Calu3 (cell line): ENCODE measurements at regions of chrX and their contacts with region 1.

Region 1: GRCh38 chrX:45769761-45770582 is 569.3 kb upstream of the DIPK2B start:
- DNase-seq: peak; percentile 84
- H3K4me3 Mint-ChIP-seq: peak overlapping the region; percentile 89
- H3K27ac Mint-ChIP-seq: peak overlapping the region; percentile 97
- H3K4me1 Mint-ChIP-seq: peaks cover 30% of the 10 kb centered on the region
- H3K27me3 Mint-ChIP-seq: no peaks in the 10 kb centered on the region
- CTCF ChIP-seq: no peak

Region 2: DNA sequence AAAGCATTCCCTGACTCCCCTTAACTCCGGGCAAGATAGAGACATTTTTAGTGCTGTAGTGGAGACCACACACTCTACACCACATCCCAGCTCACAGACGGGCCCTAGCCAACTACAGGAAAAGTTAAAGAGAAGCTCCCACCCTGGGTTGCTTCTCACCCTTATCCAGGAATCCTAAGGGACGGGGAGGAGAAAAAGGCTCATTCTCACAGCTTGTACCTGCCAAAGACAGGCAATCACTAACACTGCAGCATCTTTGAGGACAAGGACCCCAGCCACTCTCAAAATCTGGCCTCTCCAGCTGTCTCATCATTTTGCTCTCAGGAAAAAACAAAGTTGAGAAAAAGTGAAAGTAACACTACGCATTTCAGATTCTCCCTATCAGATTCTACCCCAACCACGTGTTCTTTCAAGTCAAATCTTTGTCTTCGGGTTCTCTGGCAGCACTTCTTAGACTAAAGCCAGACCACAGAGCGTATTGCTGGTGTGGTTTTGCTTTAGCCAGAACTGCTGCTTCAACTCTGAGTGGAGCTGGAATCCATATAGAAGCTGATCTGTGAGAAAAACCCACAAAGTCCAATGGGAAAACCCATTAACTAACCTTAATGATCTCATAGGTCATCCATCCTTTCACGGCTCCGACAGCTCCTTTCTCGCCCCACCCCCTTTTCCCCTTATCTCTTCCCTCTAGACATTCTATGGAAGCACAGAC is 36.6 kb after region 1 on chrX:
- CTCF ChIA-PET with region 1: interaction called, 3 read pairs
- intact Hi-C with region 1: loop called (anchors 5 kb)
- DNase-seq: no peak
- H3K4me3 Mint-ChIP-seq: peak overlapping the region; percentile 67
- H3K27ac Mint-ChIP-seq: peak overlapping the region; percentile 86
- H3K4me1 Mint-ChIP-seq: peaks cover 65% of the 10 kb centered on the region
- H3K27me3 Mint-ChIP-seq: no peaks in the 10 kb centered on the region
- CTCF ChIP-seq: no peak

Region 3: DNA sequence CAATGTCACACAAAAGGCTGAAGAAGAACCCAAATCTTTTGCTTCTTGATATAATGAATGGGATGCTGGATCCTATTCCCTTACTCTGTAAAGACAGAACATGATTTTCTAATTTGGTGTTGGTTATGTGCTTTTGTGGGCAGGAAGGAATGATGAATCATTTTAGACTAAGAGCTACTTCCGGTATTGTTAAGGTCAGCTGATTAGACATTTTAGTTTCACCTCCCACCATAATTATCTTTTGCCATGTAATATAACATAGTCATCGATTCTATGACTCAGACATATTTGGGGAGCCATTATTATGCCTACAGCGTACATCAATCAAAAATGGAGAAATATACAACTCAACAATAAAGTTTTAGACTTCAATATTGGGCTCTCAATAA is 509.9 kb after region 1 on chrX:
- CTCF ChIA-PET with region 1: no interaction called
- intact Hi-C with region 1: no loop called
- DNase-seq: no peak
- H3K4me3 Mint-ChIP-seq: no peak overlapping the region
- H3K27ac Mint-ChIP-seq: peak overlapping the region; percentile 74
- H3K4me1 Mint-ChIP-seq: peaks cover 9% of the 10 kb centered on the region
- H3K27me3 Mint-ChIP-seq: no peaks in the 10 kb centered on the region
- CTCF ChIP-seq: no peak